HepG2 (cell line): ENCODE measurements at regions of chr6 and their contacts with region 1.

Region 1: GRCh38 chr6:147970975-147971374 is 371.7 kb upstream of the SASH1 start:
- DNase-seq: peak; percentile 12
- ATAC-seq: peak; percentile 85
- H3K4me3 ChIP-seq: no peak overlapping the region
- H3K27ac ChIP-seq: no peak overlapping the region
- H3K4me1 ChIP-seq: no peaks in the 10 kb centered on the region
- H3K27me3 ChIP-seq: no peaks in the 10 kb centered on the region
- CTCF ChIP-seq: peak; percentile 54
- EP300 ChIP-seq: no peak
- POLR2A ChIP-seq: no peak
- RAD21 ChIP-seq: no peak

Region 2: GRCh38 chr6:147390909-147391536 is 580.0 kb before region 1 on chr6:
- CTCF ChIA-PET with region 1: no interaction called
- POLR2A ChIA-PET with region 1: no interaction called
- in situ Hi-C with region 1: no loop called
- intact Hi-C with region 1: loop called (anchors 5 kb)
- DNase-seq: peak; percentile 27
- ATAC-seq: 0 out of 3 replicates have a peak, but pooled peaks have one; percentile 31
- H3K4me3 ChIP-seq: no peak overlapping the region; a peak in 1 of 6 replicates
- H3K27ac ChIP-seq: no peak overlapping the region
- H3K4me1 ChIP-seq: peaks cover 8% of the 10 kb centered on the region
- H3K27me3 ChIP-seq: 0 out of 5 replicates have a peak, but pooled peaks cover 0 to under 1% of the 10 kb centered on the region in 2 experiments
- CTCF ChIP-seq: peak; percentile 47
- EP300 ChIP-seq: no peak
- POLR2A ChIP-seq: no peak
- RAD21 ChIP-seq: no peak

Region 3: GRCh38 chr6:147506704-147507114 is 464.3 kb before region 1 on chr6:
- CTCF ChIA-PET with region 1: interaction called, 7 read pairs
- POLR2A ChIA-PET with region 1: no interaction called
- in situ Hi-C with region 1: loop called (anchors 10 kb)
- intact Hi-C with region 1: loop called (anchors 1 kb)
- DNase-seq: peak; percentile 38
- ATAC-seq: peak; percentile 80
- H3K4me3 ChIP-seq: peak overlapping the region in 1 of 3 experiments; percentile 69; a peak in 1 of 6 replicates
- H3K27ac ChIP-seq: no peak overlapping the region
- H3K4me1 ChIP-seq: peaks cover 37% of the 10 kb centered on the region
- H3K27me3 ChIP-seq: peaks cover 10 to 46% of the 10 kb centered on the region in 2 experiments
- CTCF ChIP-seq: peak; percentile 95
- EP300 ChIP-seq: no peak
- POLR2A ChIP-seq: no peak
- RAD21 ChIP-seq: peak; percentile 92

Region 4: DNA sequence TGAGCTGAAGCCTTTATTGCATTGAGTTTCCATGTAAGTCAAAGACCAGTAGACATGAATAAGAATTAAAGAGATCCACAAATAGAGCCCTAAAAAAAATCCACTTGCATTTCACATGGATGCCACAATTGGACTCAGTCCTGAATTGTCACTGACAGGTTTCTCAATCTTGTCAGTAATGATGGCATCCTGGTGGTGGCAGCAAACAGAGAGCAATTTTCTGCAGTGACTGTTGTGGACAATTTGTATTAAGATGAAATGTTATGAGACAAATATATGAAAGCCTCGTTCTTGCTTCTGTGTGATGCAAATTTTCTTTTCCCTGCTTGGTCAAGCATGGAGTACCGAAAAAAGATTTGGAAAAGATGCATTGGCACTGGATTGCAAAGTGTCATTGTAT is 183.6 kb before region 1 on chr6:
- CTCF ChIA-PET with region 1: no interaction called
- POLR2A ChIA-PET with region 1: no interaction called
- in situ Hi-C with region 1: no loop called
- intact Hi-C with region 1: loop called (anchors 5 kb)
- DNase-seq: peak; percentile 25
- ATAC-seq: peak; percentile 55; the same call in 2 of the 3 replicates
- H3K4me3 ChIP-seq: no peak overlapping the region
- H3K27ac ChIP-seq: no peak overlapping the region
- H3K4me1 ChIP-seq: no peaks in the 10 kb centered on the region
- H3K27me3 ChIP-seq: peaks cover 0 to 2% of the 10 kb centered on the region in 2 experiments; a peak in 1 of 5 replicates
- CTCF ChIP-seq: no peak
- EP300 ChIP-seq: no peak
- POLR2A ChIP-seq: no peak
- RAD21 ChIP-seq: 0 out of 2 replicates have a peak, but pooled peaks have one; percentile 16